ENCODE measurements at regions of chr3 and their contacts with region 1.

Region 1: DNA sequence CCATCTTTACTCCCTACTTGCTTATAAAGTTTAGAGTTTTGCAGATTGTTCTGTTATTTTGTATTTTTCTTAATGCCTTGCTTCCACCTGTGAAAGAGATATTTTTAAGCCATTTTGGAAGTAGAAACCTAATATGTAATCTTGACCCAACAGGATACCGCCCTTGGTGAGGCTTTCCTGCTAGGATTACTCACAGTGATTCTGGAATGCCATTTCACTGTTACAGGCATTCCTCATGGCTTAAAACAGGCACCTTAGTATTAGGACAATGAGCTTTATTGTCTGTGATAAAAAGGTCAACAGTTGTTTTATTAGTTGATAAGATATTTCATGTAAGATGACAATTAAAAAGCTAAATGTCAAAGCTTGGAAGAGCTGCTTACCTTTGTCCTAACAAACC is 58.2 kb downstream of the PHLDB2 start:
- DNase-seq: peak; percentile 94
- ATAC-seq: peak; percentile 97
- H3K4me3 ChIP-seq: peak overlapping the region; percentile 12; the same call in 1 of the 2 replicates
- H3K27ac ChIP-seq: peak overlapping the region; percentile 41
- H3K4me1 ChIP-seq: peaks cover 46% of the 10 kb centered on the region
- H3K27me3 ChIP-seq: no peaks in the 10 kb centered on the region
- CTCF ChIP-seq: no peak

Region 2: DNA sequence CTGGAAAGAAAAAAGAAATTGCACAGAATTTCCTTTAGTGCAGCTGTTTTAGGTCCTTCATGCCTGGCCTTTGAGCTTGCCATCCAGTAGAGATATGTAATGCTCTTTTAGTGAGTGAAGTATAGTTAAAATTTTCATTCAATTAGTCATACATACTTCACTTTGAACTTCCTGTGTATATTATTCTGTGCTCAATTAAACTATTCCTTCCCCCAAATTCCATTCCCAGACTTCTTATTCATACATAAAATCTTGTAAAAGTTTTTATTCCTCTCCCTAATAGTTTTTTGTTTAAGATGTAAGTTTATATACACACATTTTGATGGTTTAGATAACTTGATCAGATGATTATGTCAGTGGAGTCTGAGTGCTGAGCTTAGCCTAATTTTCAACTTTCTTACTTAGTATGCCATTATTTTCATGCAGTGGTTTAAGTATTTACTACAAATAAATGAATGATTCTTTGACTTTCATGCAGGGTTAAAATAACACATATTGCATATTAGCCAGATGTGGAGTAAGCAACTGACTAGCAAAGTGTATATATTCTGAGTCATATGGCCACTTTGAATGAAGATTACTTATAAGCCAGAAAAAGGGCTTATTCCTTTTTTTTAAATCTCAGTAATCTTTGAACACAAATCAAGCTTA is 19.0 kb after region 1 on chr3:
- CTCF ChIA-PET with region 1: interaction called, 3 read pairs
- POLR2A ChIA-PET with region 1: no interaction called
- intact Hi-C with region 1: loop called (anchors 2 kb)
- DNase-seq: peak; percentile 89
- ATAC-seq: peak; percentile 94
- H3K4me3 ChIP-seq: peak overlapping the region; percentile 18; the same call in 1 of the 2 replicates
- H3K27ac ChIP-seq: peak overlapping the region; percentile 89
- H3K4me1 ChIP-seq: peaks cover 45% of the 10 kb centered on the region
- H3K27me3 ChIP-seq: no peaks in the 10 kb centered on the region
- CTCF ChIP-seq: no peak

Region 3: GRCh38 chr3:112111785-112112402 is 194.6 kb after region 1 on chr3:
- CTCF ChIA-PET with region 1: no interaction called
- POLR2A ChIA-PET with region 1: no interaction called
- intact Hi-C with region 1: no loop called
- DNase-seq: peak; percentile 89
- ATAC-seq: peak; percentile 95
- H3K4me3 ChIP-seq: no peak overlapping the region
- H3K27ac ChIP-seq: no peak overlapping the region
- H3K4me1 ChIP-seq: peaks cover 13% of the 10 kb centered on the region
- H3K27me3 ChIP-seq: no peaks in the 10 kb centered on the region
- CTCF ChIP-seq: peak; percentile 94